GM23248 (cell line): ENCODE measurements at regions of chr4 and their contacts with region 1.

Region 1: GRCh38 chr4:118086344-118086743 is 52.1 kb downstream of the NDST3 start:
- DNase-seq: peak; percentile 52
- H3K4me3 ChIP-seq: no peak overlapping the region
- H3K27ac ChIP-seq: no peak overlapping the region
- H3K4me1 ChIP-seq: peaks cover 12% of the 10 kb centered on the region; the same call in 1 of the 2 replicates
- H3K27me3 ChIP-seq: 0 out of 2 replicates have a peak, but pooled peaks cover 11% of the 10 kb centered on the region

Region 2: GRCh38 chr4:118213101-118213500 is 126.8 kb after region 1 on chr4:
- in situ Hi-C with region 1: loop called (anchors 10 kb)
- DNase-seq: no peak
- H3K4me3 ChIP-seq: no peak overlapping the region
- H3K27ac ChIP-seq: no peak overlapping the region
- H3K4me1 ChIP-seq: no peaks in the 10 kb centered on the region
- H3K27me3 ChIP-seq: peaks cover 5% of the 10 kb centered on the region; the same call in 1 of the 2 replicates

Region 3: GRCh38 chr4:118265312-118266144 is 179.2 kb after region 1 on chr4:
- in situ Hi-C with region 1: no loop called
- DNase-seq: peak; percentile 17
- H3K4me3 ChIP-seq: peak overlapping the region; percentile 71
- H3K27ac ChIP-seq: no peak overlapping the region
- H3K4me1 ChIP-seq: no peaks in the 10 kb centered on the region
- H3K27me3 ChIP-seq: peaks cover 3% of the 10 kb centered on the region; the same call in 1 of the 2 replicates